ENCODE measurements at regions of chr7 and their contacts with region 1.

Region 1: DNA sequence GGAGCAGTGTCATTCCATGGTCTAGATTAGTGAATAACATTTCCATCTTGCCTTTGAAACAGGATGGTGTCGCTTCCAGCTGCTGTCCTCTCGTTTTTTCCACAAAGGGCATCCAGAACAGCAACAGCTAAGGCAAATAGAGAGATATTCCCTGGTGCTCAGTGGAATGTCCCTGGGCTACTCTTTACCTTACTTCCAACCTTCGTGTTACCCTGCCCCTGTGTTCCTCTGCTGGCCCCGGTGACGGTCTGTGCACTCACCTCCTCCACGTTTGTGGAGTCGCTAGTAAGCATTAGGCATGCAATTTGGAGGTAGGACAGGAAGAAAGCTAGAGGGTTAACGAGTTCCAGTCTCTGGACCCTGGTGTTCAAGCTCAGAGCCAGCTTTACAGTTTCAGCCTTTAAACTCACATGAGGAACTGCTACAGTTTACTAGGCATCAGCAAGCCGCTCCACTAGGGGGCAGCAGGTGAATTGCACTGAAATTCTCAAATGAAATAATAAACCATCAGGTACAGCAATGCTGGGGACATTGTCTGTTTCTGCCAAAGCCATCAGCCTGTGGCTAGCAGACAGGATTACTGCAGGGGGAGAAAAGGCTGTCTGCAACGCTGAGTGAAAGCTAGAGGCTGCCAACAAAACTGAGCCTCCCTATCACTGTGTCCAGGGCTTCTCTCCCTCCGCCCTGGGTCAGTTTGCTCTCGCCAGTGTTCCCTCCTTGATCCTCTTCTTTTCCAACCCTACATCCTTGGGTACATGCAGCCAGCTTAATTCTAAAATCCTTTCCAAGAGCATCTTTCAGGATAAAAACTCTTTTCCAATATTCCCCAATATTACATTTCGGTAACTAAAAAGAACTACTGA is 9.0 kb downstream of the MRPL32 start:
- DNase-seq: peak; percentile 68

Region 2: GRCh38 chr7:42924223-42924838 is 16.9 kb before region 1 on chr7:
- CTCF ChIA-PET with region 1: no interaction called
- POLR2A ChIA-PET with region 1: no interaction called
- DNase-seq: no peak

Region 3: GRCh38 chr7:43723007-43723341 is 781.8 kb after region 1 on chr7:
- CTCF ChIA-PET with region 1: interaction called, 10 read pairs
- POLR2A ChIA-PET with region 1: no interaction called
- DNase-seq: no peak